Left cardiac atrium (tissue), 4 donors: ENCODE measurements at regions of chr7 and their contacts with region 1.

Region 1: DNA sequence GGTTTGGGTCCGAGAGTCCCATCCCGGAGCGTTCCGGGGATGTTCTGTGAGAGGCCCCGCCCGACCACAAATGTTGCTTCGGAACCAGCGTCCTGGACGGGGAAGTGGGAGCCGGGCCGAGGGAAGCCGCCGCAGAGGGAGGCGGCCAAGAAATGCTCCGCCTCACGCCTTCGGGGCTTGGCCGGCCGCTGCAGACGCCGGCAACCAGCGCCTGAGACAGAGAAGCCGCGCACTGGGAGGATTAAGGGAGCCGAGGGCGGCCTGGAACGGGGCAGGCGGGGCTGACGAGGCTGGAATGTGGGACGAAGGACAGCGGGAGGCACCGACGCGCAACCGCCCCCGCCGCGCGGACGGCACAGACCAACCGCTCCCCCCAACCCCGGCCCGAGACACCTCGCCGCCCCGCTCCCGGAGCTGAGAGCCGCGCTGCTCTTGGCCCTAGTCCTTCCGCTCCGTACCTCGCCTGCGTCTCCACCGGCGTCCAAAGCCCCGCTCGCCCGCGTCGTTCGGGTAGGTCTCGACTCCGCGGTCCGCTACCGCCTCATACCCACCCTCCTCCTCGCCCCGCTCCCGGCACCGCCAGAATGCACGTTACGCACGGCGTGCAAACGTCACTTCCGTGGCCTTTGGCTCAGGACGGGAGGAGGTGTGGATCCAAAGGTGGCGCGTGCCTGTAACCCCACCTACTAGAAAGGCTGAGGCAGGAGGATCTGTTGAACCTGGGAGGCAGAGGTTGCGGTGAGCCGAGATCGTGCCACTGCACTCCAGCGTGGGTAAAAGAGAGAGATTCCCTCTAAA is 36.7 kb upstream of the KCTD7 start:
- DNase-seq: peak; percentile 95
- ATAC-seq: peak; percentile 97

Region 2: DNA sequence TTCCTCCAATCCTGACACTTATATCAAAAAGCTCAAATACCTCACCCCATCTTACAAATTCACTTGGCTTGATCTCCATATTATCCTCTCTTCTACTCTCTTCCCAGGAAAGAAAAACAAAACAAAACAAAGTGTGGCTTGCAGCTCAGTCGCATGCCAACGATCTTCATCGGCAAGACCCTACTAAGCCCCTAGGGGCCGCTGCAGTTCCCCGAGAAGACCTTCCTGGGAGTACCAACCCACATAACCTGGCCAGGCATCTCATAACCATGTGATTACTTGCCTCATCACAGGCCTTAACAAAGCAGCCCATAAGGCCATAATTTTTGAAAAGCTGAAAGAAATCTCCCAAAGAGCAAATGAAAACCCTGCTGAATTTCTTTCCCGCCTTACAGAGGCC is 1114.7 kb before region 1 on chr7:
- intact Hi-C with region 1: no loop called
- DNase-seq: no peak
- ATAC-seq: no peak

Region 3: DNA sequence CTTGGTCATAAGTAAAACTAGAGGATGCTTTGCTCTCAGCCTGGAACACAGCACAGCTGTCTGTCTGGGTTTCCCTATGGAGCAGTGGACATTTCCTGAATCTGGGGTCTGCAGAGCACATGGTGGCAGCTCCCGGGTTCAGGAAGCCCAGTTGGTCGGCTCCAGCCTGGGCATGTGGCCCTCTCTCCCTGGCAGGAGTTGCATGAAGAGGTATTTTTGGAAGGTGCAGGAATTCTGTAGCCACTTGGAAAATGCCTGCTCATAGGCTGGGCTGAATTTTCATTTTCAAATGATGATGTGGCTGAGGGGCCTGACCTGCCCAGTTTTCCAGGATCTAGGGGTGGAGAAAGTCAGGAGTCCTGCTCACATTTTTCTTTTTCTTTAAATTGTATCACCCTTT is 393.5 kb before region 1 on chr7:
- intact Hi-C with region 1: no loop called
- DNase-seq: no peak
- ATAC-seq: peak in 1 of 2 donors; percentile 35

Region 4: DNA sequence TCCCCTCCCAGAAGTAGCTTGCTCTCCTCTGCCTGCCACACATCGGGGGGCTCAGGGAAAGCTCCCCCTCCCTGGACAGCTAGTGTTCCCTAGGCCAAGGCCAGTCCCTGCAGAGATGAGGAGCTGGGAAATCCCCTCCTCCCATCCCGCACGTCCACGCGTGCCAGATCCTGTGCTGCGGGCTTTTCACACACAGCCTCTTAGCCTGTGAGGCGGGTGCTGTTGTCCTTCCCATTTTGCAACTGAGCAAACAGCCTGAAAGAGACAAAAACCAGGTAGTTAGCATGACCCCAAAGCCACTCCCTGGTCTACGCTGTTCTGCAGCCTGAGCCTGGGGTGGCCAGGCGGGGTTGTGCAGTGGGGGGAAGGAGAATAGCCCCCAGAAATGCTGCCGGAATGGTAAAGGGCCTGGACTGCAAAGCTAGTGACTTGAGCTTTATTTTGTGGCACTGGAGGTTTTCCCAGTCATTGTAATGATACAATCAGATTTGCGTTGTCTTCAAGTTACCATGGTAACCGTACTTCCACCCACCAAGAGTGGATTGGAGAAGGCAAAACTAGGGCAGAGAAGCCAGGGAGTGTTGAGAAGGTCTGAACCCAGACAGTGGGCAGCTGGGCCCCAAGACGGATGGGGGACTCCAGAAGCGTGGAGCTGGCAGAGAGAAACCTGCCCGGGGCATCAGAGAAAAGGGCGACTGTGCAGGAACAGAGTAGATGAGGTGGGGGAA is 62.0 kb before region 1 on chr7:
- intact Hi-C with region 1: no loop called
- DNase-seq: no peak
- ATAC-seq: no peak

Region 5: DNA sequence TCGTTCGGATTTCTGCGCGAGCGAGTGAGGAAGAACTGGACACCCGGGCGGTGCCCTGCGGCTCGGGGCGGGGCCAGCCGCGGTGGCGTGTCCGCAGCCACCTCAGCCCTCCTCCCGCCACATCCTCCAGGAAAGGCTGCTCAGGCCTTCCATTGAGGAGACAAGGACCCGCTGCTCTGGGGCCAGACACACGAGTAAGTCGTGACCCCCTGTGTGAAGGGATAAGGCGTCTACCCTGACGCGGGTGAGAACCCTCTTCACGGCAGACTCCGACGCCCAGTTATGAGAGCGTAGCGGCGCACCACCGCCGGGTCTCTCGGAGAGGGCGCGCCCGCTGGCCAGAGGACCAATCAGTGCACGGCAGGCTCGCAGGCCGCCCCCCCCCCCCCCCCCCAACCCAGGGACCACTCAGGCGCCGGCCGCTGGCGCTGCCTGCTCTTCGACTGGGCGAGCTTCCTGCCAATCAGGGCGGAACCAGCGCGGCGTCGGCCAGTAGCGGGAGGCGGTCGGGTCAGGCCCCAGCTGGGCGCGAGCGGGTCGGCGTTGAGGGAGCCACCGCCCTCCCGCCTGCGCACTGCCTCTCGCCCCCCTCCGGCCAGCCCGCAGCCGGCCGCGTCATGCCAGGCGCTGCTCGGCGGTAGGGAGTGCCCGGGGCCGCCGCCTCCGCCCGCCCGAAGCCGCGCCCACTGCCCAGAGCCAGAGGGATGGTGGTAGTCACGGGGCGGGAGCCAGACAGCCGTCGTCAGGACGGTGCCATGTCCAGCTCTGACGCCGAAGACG is 36.6 kb after region 1 on chr7 and contains the start of gene KCTD7:
- intact Hi-C with region 1: loop called in 1 of 2 experiments (anchors 5 kb)
- DNase-seq: peak; percentile 99
- ATAC-seq: peak; percentile 94 to 96
- total RNA-seq, gene KCTD7: 9.2 to 11.3 TPM

Region 6: GRCh38 chr7:66946545-66946944 is 354.5 kb after region 1 on chr7:
- intact Hi-C with region 1: no loop called
- DNase-seq: no peak
- ATAC-seq: no peak